Panc1 (cell line): ENCODE measurements at regions of chr20 and their contacts with region 1.

Region 1: DNA sequence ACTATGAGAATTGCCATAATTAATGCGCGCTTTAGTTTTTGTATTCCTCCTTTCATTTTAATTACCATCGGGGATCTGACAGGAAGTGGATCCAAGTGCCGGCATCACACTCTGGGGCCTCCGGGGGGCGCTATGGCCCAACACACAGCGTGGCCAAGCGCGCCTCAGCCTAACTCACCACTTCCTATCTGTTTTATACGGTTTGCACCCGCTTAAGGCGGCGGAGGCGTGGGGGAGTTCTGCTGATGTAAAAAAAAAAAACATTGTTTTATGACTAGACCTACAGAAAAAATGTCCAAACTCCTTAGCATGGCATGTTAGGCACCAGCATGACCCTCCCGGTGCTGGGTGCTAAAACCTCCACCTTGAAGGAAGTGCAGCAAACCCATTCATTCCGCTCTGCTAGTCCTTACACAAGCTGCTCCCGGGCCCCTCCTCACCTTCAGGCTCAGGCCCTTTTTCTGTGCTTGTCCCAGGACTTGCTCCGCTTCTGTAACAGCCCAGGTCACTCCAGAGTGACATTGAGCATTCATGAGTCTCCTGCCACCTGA is 4.5 kb upstream of the EBF4 start:
- DNase-seq: no peak
- ATAC-seq: no peak
- H3K4me3 ChIP-seq: no peak overlapping the region; a peak in 1 of 4 replicates
- H3K27ac ChIP-seq: no peak overlapping the region
- H3K4me1 ChIP-seq: peaks cover 7% of the 10 kb centered on the region; the same call in 1 of the 2 replicates
- H3K27me3 ChIP-seq: no peaks in the 10 kb centered on the region
- CTCF ChIP-seq: peak; percentile 90

Region 2: DNA sequence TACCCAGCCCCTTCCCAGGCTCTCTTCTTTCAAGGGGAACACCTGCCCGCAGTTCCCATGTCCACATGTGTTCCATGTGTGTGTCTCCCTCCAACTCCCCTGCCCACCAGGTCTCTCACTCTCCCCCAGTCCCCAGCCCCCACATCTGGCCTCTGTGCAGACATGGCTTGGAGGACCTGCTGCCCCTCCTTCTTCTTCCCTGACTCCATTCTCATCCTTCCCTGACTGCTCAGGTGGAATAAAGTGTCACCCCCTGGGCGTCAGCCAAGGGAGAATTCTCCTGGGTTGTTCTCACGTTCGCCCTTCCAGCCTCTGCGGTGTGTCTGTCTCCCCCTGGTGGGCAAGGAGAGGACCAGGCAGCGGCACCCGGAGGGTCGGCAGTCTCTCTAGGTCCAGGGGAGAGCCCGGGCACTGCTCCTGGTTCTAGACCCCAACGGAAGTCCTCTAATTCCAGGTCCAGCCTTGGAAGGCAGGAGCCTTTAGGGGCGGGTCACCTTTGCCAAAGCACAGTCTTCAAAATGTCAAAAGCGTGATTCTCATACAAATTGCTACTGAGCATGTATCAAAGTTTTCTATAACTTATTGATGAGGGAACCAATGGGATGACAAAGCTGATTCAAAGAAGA is 54.9 kb after region 1 on chr20:
- CTCF ChIA-PET with region 1: interaction called, 3 read pairs
- POLR2A ChIA-PET with region 1: no interaction called
- in situ Hi-C with region 1: no loop called
- intact Hi-C with region 1: loop called (anchors 5 kb)
- DNase-seq: no peak
- ATAC-seq: peak; percentile 83
- H3K4me3 ChIP-seq: no peak overlapping the region
- H3K27ac ChIP-seq: no peak overlapping the region
- H3K4me1 ChIP-seq: peaks cover 4% of the 10 kb centered on the region
- H3K27me3 ChIP-seq: no peaks in the 10 kb centered on the region
- CTCF ChIP-seq: peak; percentile 96

Region 3: GRCh38 chr20:2851086-2851485 is 163.0 kb after region 1 on chr20:
- CTCF ChIA-PET with region 1: no interaction called
- POLR2A ChIA-PET with region 1: no interaction called
- in situ Hi-C with region 1: no loop called
- intact Hi-C with region 1: loop called (anchors 5 kb)
- DNase-seq: no peak
- ATAC-seq: no peak
- H3K4me3 ChIP-seq: no peak overlapping the region
- H3K27ac ChIP-seq: no peak overlapping the region
- H3K4me1 ChIP-seq: no peaks in the 10 kb centered on the region
- H3K27me3 ChIP-seq: no peaks in the 10 kb centered on the region
- CTCF ChIP-seq: no peak